ENCODE measurements at regions of chr9 and their contacts with region 1.

Region 1: GRCh38 chr9:136093995-136094881 is 851 bp downstream of the NACC2 start:
- DNase-seq: peak; percentile 83
- ATAC-seq: peak; percentile 75
- H3K4me3 Mint-ChIP-seq: peak overlapping the region; percentile 71
- H3K27ac Mint-ChIP-seq: peak overlapping the region; percentile 46
- H3K4me1 Mint-ChIP-seq: peaks cover 15% of the 10 kb centered on the region
- H3K27me3 Mint-ChIP-seq: no peaks in the 10 kb centered on the region
- CTCF ChIP-seq: no peak

Region 2: GRCh38 chr9:136109351-136110081 is 15.3 kb after region 1 on chr9:
- CTCF ChIA-PET with region 1: interaction called, 17 read pairs
- POLR2A ChIA-PET with region 1: interaction called, 51 read pairs
- intact Hi-C with region 1: no loop called
- DNase-seq: peak; percentile 96
- ATAC-seq: peak; percentile 85
- H3K4me3 Mint-ChIP-seq: peak overlapping the region; percentile 87
- H3K27ac Mint-ChIP-seq: peak overlapping the region; percentile 98
- H3K4me1 Mint-ChIP-seq: peaks cover 71% of the 10 kb centered on the region
- H3K27me3 Mint-ChIP-seq: no peaks in the 10 kb centered on the region
- CTCF ChIP-seq: no peak

Region 3: GRCh38 chr9:136204838-136205706 is 110.8 kb after region 1 on chr9 and contains the start of gene LHX3:
- CTCF ChIA-PET with region 1: no interaction called
- POLR2A ChIA-PET with region 1: no interaction called
- intact Hi-C with region 1: no loop called
- DNase-seq: no peak
- ATAC-seq: peak; percentile 26
- H3K4me3 Mint-ChIP-seq: no peak within 1 kb of the TSS
- H3K27ac Mint-ChIP-seq: no peak within 1 kb of the TSS
- H3K4me1 Mint-ChIP-seq: no peaks in the 10 kb centered on the region
- H3K27me3 Mint-ChIP-seq: peaks cover 27% of the 10 kb centered on the region
- CTCF ChIP-seq: no peak
- total RNA-seq, gene LHX3: not detected

Region 4: GRCh38 chr9:136323371-136323789 is 229.1 kb after region 1 on chr9:
- CTCF ChIA-PET with region 1: no interaction called
- POLR2A ChIA-PET with region 1: no interaction called
- intact Hi-C with region 1: no loop called
- DNase-seq: no peak
- ATAC-seq: no peak
- H3K4me3 Mint-ChIP-seq: no peak overlapping the region
- H3K27ac Mint-ChIP-seq: no peak overlapping the region
- H3K4me1 Mint-ChIP-seq: peaks cover 2% of the 10 kb centered on the region
- H3K27me3 Mint-ChIP-seq: no peaks in the 10 kb centered on the region
- CTCF ChIP-seq: no peak

Measured in activated CD8-positive, alpha-beta T cell treated with anti-CD3 and anti-CD28 coated beads for 36 hours (primary cell).